Tibial artery (tissue), 4 donors: ENCODE measurements at regions of chr19 and their contacts with region 1.

Region 1: GRCh38 chr19:41462497-41462896 is 19.5 kb downstream of the ERICH4 start:
- DNase-seq: no peak
- H3K4me3 ChIP-seq: no peak overlapping the region
- H3K27ac ChIP-seq: no peak overlapping the region
- H3K4me1 ChIP-seq: no peaks in the 10 kb centered on the region
- H3K27me3 ChIP-seq: peaks cover 0 to 58% of the 10 kb centered on the region in 2 donors
- CTCF ChIP-seq: no peak

Region 2: DNA sequence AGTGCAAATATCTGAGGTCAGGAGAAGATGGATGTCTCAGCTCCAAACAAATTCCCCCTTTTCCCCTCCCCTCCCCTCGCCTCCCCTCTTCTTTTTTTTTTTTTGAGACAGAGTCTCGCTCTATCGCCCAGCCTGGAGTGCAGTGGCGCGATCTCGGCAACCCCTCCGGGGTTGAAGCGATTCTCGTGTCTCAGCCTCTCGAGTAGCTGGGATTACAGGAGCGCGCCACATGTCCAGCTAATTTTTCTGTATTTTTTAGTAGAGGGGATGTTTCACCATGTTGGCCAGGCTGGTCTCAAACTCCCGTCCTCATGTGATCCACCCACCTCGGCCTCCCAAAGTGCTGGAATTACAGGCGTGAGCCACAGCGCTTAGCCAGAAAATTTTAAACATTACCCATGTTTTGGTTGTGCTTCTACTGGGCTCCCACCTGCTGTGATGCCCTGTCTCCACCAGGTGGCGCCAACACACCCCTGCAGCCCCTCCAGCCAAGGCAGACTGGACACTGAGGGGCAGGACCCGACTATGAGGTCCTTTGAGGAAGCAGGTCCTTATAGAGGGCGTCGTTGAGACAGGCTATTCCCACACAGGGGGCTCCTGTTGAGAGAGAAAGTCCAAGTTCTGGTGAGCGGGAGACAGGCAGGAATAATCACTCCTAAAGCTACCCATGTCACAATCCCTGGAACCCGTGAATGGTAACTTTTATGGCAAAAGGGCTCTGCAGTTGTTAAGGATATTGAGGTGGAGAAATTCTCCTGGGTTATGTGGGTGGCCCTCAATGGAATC is 13.2 kb before region 1 on chr19:
- intact Hi-C with region 1: no loop called
- DNase-seq: peak; percentile 69 to 81
- H3K4me3 ChIP-seq: peak overlapping the region; percentile 17 to 26
- H3K27ac ChIP-seq: no peak overlapping the region
- H3K4me1 ChIP-seq: peaks cover 0 to 10% (median 3%) of the 10 kb centered on the region in 4 donors
- H3K27me3 ChIP-seq: peaks cover 0 to 7% of the 10 kb centered on the region in 2 donors
- CTCF ChIP-seq: peak; percentile 88 to 97

Region 3: DNA sequence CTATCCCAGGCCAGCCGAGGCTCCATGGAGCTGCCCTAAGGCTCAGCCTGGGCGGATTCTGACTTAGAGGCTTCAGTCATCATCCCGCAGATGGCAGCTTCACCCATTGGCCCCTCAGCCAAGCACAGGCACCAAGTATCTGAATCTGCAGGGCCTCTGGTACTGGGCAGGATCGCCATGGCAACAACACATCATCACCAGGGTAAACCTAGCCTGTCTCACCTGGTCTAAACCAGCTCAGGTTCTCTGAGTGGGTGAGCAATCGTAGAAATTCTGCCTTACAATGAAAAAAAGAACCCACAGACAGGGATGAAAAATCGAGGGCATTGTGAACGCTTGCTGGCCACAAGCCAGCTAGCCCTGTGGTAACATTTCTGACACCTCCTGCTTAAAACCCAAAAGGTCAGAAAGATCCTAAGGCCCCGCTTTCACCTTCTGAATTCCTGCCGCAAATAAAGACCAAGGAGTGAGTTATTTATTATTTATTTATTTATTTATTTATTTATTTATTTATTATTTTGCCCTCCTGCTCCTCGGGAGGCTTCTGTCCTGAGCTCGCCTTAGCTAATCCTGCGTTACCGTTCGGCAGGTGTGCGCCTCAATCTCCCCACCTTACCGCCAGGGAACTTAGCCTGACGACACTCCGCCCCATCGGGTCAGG is 101.5 kb after region 1 on chr19:
- intact Hi-C with region 1: loop called (anchors 5 kb)
- DNase-seq: no peak
- H3K4me3 ChIP-seq: no peak overlapping the region
- H3K27ac ChIP-seq: no peak overlapping the region
- H3K4me1 ChIP-seq: peaks cover 0 to 7% (median 0%) of the 10 kb centered on the region in 4 donors
- H3K27me3 ChIP-seq: peaks cover 0 to 40% of the 10 kb centered on the region in 2 donors
- CTCF ChIP-seq: no peak